ENCODE measurements at regions of chr2 and their contacts with region 1.

Region 1: DNA sequence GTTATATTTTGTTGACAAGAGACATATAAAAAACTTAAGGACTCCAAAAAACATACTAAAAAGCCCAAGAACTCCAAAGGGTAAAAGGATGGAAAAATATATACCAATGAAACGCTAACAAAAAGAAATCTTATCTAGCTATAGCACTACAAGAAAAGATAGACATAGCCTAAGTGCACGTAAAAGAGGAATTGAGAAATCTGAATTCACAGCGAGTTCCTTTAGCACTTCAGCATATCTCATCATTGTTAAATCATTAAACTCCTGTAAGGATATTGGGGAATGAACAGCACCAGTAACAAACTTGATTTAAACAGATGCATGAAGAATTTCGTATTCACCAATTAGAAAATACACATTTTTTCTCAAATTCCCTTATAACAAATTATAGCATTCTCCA is 134.1 kb downstream of the CAPN13 start:
- DNase-seq: no peak
- ATAC-seq: no peak
- H3K4me3 ChIP-seq: no peak overlapping the region
- H3K27ac ChIP-seq: no peak overlapping the region
- H3K4me1 ChIP-seq: no peaks in the 10 kb centered on the region
- H3K27me3 ChIP-seq: no peaks in the 10 kb centered on the region
- CTCF ChIP-seq: no peak
- EP300 ChIP-seq: no peak
- POLR2A ChIP-seq: no peak
- RAD21 ChIP-seq: no peak

Region 2: GRCh38 chr2:30511122-30512083 is 161.7 kb before region 1 on chr2:
- CTCF ChIA-PET with region 1: no interaction called
- POLR2A ChIA-PET with region 1: no interaction called
- RAD21 ChIA-PET with region 1: no interaction called
- SMC1A ChIA-PET with region 1: no interaction called
- in situ Hi-C with region 1: no loop called
- intact Hi-C with region 1: no loop called
- DNase-seq: no peak
- ATAC-seq: no peak
- H3K4me3 ChIP-seq: no peak overlapping the region
- H3K27ac ChIP-seq: no peak overlapping the region
- H3K4me1 ChIP-seq: peaks cover 8% of the 10 kb centered on the region; the same call in 1 of the 2 replicates
- H3K27me3 ChIP-seq: no peaks in the 10 kb centered on the region
- CTCF ChIP-seq: no peak
- EP300 ChIP-seq: no peak
- POLR2A ChIP-seq: no peak
- RAD21 ChIP-seq: no peak

Region 3: GRCh38 chr2:30636311-30636710 is 36.8 kb before region 1 on chr2:
- CTCF ChIA-PET with region 1: no interaction called
- POLR2A ChIA-PET with region 1: no interaction called
- RAD21 ChIA-PET with region 1: no interaction called
- SMC1A ChIA-PET with region 1: no interaction called
- in situ Hi-C with region 1: no loop called
- intact Hi-C with region 1: loop called (anchors 1 kb)
- DNase-seq: no peak
- ATAC-seq: no peak
- H3K4me3 ChIP-seq: no peak overlapping the region
- H3K27ac ChIP-seq: no peak overlapping the region
- H3K4me1 ChIP-seq: peaks cover 1% of the 10 kb centered on the region; the same call in 1 of the 2 replicates
- H3K27me3 ChIP-seq: no peaks in the 10 kb centered on the region
- CTCF ChIP-seq: no peak
- EP300 ChIP-seq: no peak
- POLR2A ChIP-seq: no peak
- RAD21 ChIP-seq: no peak

Region 4: GRCh38 chr2:30653847-30654246 is 19.3 kb before region 1 on chr2:
- CTCF ChIA-PET with region 1: no interaction called
- POLR2A ChIA-PET with region 1: no interaction called
- RAD21 ChIA-PET with region 1: no interaction called
- SMC1A ChIA-PET with region 1: no interaction called
- in situ Hi-C with region 1: no loop called
- intact Hi-C with region 1: no loop called
- DNase-seq: no peak
- ATAC-seq: peak; percentile 31; the same call in 2 of the 3 replicates
- H3K4me3 ChIP-seq: no peak overlapping the region
- H3K27ac ChIP-seq: no peak overlapping the region
- H3K4me1 ChIP-seq: no peaks in the 10 kb centered on the region
- H3K27me3 ChIP-seq: no peaks in the 10 kb centered on the region; a peak in 1 of 4 replicates
- CTCF ChIP-seq: no peak
- EP300 ChIP-seq: no peak
- POLR2A ChIP-seq: no peak
- RAD21 ChIP-seq: no peak